Activated CD4-positive, alpha-beta memory T cell treated with anti-CD3 and anti-CD28 coated beads for 36 hours (primary cell): ENCODE measurements at regions of chr3 and their contacts with region 1.

Region 1: DNA sequence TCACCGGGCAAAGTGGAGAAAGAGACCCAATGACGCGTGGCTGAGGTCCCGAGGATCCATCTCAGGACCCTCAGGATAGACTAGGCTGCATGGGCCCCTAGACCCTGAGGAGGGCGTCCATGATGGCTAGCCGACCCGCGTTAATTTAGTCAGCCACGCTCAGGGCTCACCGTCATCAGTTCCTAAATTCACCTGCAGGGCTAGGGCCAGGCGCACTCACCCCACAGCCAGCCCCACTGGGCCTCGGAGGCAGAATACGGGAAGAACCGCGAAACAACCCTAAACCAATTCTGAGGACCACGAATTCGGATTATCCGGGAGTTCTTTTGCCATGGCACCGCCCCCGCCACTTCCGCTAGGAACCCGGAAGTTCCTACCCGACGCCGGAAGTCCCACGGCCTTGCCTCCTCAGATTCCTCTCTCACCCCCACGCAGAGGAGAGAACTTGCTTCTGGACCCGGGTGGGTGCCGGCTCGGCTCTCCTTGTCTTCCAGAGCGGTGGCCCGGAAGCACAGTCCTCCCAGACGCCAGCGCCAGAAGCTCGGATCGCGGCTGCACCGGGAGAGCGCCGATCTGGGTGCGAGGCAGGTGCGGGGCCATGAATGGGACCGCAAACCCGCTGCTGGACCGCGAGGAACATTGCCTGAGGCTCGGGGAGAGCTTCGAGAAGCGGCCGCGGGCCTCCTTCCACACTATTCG is at the starts of genes EAF1 and METTL6:
- DNase-seq: peak; percentile 92
- H3K4me3 Mint-ChIP-seq: peak within 1 kb of the TSS; percentile 94
- H3K27ac Mint-ChIP-seq: peak within 1 kb of the TSS; percentile 82
- H3K4me1 Mint-ChIP-seq: peaks cover 53% of the 10 kb centered on the region
- H3K27me3 Mint-ChIP-seq: no peaks in the 10 kb centered on the region
- total RNA-seq, gene EAF1: 23.4 to 23.6 TPM
- total RNA-seq, gene METTL6: 17.3 to 17.8 TPM

Region 2: GRCh38 chr3:15500107-15500724 is 72.9 kb after region 1 on chr3:
- CTCF ChIA-PET with region 1: no interaction called
- POLR2A ChIA-PET with region 1: no interaction called
- intact Hi-C with region 1: loop called (anchors 5 kb)
- DNase-seq: no peak
- H3K4me3 Mint-ChIP-seq: no peak overlapping the region
- H3K27ac Mint-ChIP-seq: no peak overlapping the region
- H3K4me1 Mint-ChIP-seq: peaks cover 25% of the 10 kb centered on the region
- H3K27me3 Mint-ChIP-seq: no peaks in the 10 kb centered on the region

Region 3: GRCh38 chr3:15535732-15536131 is 108.4 kb after region 1 on chr3:
- CTCF ChIA-PET with region 1: interaction called, 5 read pairs
- POLR2A ChIA-PET with region 1: no interaction called
- intact Hi-C with region 1: loop called (anchors 5 kb)
- DNase-seq: peak; percentile 73
- H3K4me3 Mint-ChIP-seq: no peak overlapping the region
- H3K27ac Mint-ChIP-seq: peak overlapping the region; percentile 61
- H3K4me1 Mint-ChIP-seq: peaks cover 44% of the 10 kb centered on the region
- H3K27me3 Mint-ChIP-seq: no peaks in the 10 kb centered on the region

Region 4: GRCh38 chr3:15557511-15557946 is 130.2 kb after region 1 on chr3:
- CTCF ChIA-PET with region 1: interaction called, 6 read pairs
- POLR2A ChIA-PET with region 1: interaction called, 3 read pairs
- intact Hi-C with region 1: loop called (anchors 1 kb)
- DNase-seq: peak; percentile 75
- H3K4me3 Mint-ChIP-seq: no peak overlapping the region
- H3K27ac Mint-ChIP-seq: no peak overlapping the region
- H3K4me1 Mint-ChIP-seq: peaks cover 21% of the 10 kb centered on the region
- H3K27me3 Mint-ChIP-seq: no peaks in the 10 kb centered on the region

Region 5: DNA sequence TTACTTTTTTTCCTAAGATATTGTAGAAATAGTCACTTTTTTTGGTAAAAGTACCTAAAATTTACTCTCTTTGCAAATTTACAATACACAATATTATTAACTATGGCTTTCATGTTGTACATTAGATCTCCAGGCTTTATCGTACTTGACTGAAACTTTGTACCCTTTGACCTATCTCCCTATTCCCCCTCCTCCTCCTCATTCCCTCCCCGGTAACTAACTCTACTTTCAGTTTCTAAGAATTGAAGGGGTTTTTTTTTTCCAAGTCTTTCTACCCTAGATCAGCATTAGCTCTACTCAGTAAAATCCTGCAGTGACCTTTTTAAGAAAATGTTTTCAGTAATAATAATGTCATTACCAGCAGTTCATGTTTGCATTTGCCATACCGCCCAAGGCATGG is 163.9 kb after region 1 on chr3:
- CTCF ChIA-PET with region 1: no interaction called
- POLR2A ChIA-PET with region 1: no interaction called
- intact Hi-C with region 1: no loop called
- DNase-seq: no peak
- H3K4me3 Mint-ChIP-seq: no peak overlapping the region
- H3K27ac Mint-ChIP-seq: no peak overlapping the region
- H3K4me1 Mint-ChIP-seq: no peaks in the 10 kb centered on the region
- H3K27me3 Mint-ChIP-seq: no peaks in the 10 kb centered on the region

Region 6: DNA sequence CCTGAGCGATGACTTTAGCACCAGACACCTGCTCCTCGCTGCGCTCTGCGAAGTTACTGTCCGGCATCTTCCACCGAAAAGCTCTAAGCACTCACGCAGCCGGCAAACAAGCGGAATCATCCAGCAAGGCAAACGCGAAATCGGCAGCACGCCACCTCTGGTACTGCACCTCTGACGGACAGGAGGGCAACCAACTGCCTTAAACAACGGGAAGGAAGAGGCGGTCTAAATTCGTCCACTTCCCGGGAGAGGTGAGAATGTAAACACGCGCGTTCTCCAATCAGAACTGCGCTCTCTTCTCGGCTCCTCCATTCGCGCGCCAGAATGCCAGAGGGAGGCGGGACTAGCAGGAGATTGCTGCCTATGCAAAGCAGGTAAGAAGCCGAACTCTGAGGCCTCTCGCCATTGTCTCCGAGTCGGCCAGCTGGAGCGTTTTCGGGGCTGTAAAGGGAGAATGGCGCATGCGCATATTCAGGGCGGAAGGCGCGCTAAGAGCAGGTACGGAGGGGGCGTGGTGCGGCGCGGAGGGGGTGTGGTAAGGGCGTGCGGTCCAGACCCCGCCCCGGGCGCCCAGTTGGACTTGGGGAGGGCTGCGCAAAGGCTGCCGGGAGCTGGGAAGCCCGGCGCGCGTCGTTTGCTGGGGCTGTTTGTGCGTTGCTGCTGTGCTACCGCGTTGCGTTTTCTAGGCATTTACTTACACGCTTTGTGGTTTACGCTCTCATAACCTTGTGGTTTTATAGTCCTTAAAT is 174.2 kb after region 1 on chr3 and contains the starts of genes BTD and HACL1:
- CTCF ChIA-PET with region 1: no interaction called
- POLR2A ChIA-PET with region 1: interaction called, 3 read pairs
- intact Hi-C with region 1: loop called (anchors 2 kb)
- DNase-seq: peak; percentile 98
- H3K4me3 Mint-ChIP-seq: peak within 1 kb of the TSS; percentile 99
- H3K27ac Mint-ChIP-seq: peak within 1 kb of the TSS; percentile 94
- H3K4me1 Mint-ChIP-seq: peaks cover 43% of the 10 kb centered on the region
- H3K27me3 Mint-ChIP-seq: no peaks in the 10 kb centered on the region
- total RNA-seq, gene BTD: 8.6 to 8.7 TPM
- total RNA-seq, gene HACL1: 29.9 to 30.0 TPM